Activated naive CD4-positive, alpha-beta T cell treated with anti-CD3 and anti-CD28 coated beads for 36 hours (primary cell): ENCODE measurements at regions of chr12 and their contacts with region 1.

Region 1: DNA sequence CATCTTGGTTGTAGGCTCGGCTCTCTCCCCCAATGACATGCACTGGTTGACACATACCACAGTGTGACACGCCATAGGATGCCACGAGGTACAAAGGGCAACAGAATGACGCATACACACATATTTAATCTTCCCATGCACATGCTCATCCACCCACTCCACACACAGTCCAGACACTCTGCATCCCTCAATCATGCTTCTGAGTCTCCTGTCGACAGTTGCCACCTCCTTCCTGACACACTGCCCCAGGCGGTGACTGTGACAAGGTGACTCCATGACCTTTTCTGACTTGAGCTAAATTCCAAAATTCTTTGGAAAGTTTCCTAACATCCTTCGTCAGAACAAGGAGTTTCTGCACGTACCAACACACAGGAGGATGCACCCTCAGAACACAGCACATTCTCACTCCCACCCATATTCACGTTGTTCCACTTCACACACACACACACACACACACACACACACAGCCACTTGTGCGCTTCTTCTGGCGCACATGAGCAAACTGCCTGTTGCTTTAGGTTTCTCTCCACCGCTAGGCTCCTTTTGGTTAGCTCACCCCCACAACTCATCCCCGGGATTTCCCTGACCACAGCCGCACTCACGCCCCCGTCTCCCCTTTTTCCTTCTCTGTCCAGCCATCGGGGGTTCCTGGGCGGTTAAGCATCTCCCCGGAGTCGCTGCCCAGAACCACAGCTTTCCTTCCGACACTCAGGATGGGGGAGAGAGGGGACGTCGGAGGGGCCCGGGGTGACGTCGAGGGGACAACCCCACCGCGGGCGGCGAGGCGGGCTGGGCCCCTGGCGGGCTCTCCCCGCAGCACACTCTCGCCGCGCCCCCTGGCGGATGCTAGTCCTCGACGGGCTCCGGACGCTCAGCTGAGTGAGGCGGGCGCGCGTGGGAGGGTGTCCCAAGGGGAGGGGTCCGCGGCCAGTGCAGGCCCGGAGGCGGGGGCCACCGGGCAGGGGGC is 524 bp upstream of the WNT1 start:
- DNase-seq: peak; percentile 83
- H3K4me3 Mint-ChIP-seq: peak overlapping the region; percentile 19
- H3K27ac Mint-ChIP-seq: no peak overlapping the region
- H3K4me1 Mint-ChIP-seq: peaks cover 44% of the 10 kb centered on the region
- H3K27me3 Mint-ChIP-seq: peaks cover 67% of the 10 kb centered on the region

Region 2: GRCh38 chr12:47054659-47055058 is 1922.9 kb before region 1 on chr12:
- CTCF ChIA-PET with region 1: no interaction called
- intact Hi-C with region 1: no loop called
- DNase-seq: no peak
- H3K4me3 Mint-ChIP-seq: no peak overlapping the region
- H3K27ac Mint-ChIP-seq: no peak overlapping the region
- H3K4me1 Mint-ChIP-seq: no peaks in the 10 kb centered on the region
- H3K27me3 Mint-ChIP-seq: no peaks in the 10 kb centered on the region

Region 3: GRCh38 chr12:48651681-48652080 is 325.9 kb before region 1 on chr12:
- CTCF ChIA-PET with region 1: no interaction called
- intact Hi-C with region 1: no loop called
- DNase-seq: no peak
- H3K4me3 Mint-ChIP-seq: no peak overlapping the region
- H3K27ac Mint-ChIP-seq: no peak overlapping the region
- H3K4me1 Mint-ChIP-seq: no peaks in the 10 kb centered on the region
- H3K27me3 Mint-ChIP-seq: no peaks in the 10 kb centered on the region

Region 4: DNA sequence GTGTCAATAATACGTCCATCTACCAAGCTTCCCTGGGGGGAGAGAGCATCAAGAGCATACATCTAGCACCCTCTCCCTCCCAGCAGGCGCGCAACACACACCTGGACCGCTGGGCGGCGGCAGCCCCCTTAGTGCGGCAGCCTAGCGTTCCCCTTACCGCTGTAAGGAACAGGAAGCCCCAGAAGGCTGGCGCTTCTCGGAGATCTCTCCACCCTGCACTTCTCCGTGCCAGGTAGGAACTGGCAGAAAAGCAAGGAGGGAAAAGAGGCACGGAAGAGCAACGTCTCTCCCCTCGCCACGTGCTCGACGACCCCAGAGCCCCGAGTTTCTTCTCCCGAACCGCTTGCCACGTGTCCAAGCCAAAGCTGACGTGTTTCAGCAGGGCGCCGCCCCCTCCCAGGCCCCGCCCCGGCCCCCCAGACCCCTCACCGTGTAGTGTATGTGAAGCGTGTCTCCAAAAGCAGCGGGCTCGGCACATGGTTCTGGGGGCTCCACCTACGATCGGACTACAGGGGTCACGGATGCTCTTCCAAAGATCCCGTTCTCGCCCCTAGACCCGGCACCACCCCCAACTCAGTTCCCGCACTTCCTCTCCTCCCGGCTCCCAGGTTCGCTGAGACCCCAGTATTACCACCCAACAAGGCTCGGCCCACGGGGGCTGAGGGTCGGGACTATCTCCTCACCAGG is 52.8 kb before region 1 on chr12:
- CTCF ChIA-PET with region 1: interaction called, 36 read pairs
- intact Hi-C with region 1: loop called (anchors 1 kb)
- DNase-seq: peak; percentile 81
- H3K4me3 Mint-ChIP-seq: peak overlapping the region; percentile 91
- H3K27ac Mint-ChIP-seq: peak overlapping the region; percentile 96
- H3K4me1 Mint-ChIP-seq: peaks cover 49% of the 10 kb centered on the region
- H3K27me3 Mint-ChIP-seq: no peaks in the 10 kb centered on the region

Region 5: GRCh38 chr12:48936379-48936979 is 41.1 kb before region 1 on chr12:
- CTCF ChIA-PET with region 1: interaction called, 4 read pairs
- intact Hi-C with region 1: loop called (anchors 1 kb)
- DNase-seq: peak; percentile 90
- H3K4me3 Mint-ChIP-seq: no peak overlapping the region
- H3K27ac Mint-ChIP-seq: peak overlapping the region; percentile 47
- H3K4me1 Mint-ChIP-seq: peaks cover 10% of the 10 kb centered on the region
- H3K27me3 Mint-ChIP-seq: no peaks in the 10 kb centered on the region

Region 6: GRCh38 chr12:48957141-48958048 is 20.2 kb before region 1 on chr12 and contains the start of gene ARF3:
- CTCF ChIA-PET with region 1: interaction called, 11 read pairs
- intact Hi-C with region 1: no loop called
- DNase-seq: peak; percentile 95
- H3K4me3 Mint-ChIP-seq: peak within 1 kb of the TSS; percentile 97
- H3K27ac Mint-ChIP-seq: peak within 1 kb of the TSS; percentile 86
- H3K4me1 Mint-ChIP-seq: peaks cover 29% of the 10 kb centered on the region
- H3K27me3 Mint-ChIP-seq: peaks cover 2% of the 10 kb centered on the region
- total RNA-seq, gene ARF3: 84.4 to 87.3 TPM

Region 7: DNA sequence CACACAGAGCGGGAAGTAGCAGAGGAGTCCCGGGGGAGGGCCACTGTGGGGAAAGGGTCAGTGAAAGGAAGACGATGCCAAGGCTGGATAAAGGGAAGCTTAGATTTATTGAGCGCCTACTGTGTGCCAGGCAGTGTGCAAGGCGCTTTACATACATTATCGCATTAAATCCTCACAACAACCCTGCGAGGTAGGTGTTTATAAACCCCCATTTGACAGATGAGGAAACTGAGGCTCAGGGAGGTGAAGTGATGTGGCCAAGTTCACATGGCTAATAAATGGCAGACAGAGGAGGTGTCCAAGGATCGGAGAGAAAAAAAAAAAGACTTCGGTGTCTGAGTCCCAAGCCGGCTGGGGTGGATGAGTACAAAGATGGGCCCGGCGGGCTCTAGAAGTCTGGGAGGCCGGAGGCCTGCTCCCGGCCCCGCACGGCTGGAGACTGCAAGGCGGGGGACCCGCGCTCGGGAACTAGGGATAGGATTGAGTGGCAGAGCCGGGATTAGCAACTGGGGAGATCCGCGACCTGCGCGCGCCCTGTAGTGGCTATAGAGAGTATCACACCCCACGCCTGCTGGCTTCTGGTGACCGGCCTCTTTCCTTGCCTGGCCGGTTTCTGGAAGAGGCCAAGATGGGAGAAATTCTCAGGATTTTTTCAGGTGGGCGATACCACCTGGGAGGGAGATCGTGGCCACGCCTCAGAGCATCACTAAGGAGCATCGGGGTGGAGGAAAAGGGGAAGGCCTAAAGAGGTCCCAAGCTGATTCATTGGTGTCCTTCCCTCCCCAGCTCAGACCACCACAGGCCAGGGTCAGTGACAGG is 17.7 kb after region 1 on chr12:
- CTCF ChIA-PET with region 1: interaction called, 223 read pairs
- intact Hi-C with region 1: loop called (anchors 1 kb)
- DNase-seq: peak; percentile 69
- H3K4me3 Mint-ChIP-seq: peak overlapping the region; percentile 10
- H3K27ac Mint-ChIP-seq: no peak overlapping the region
- H3K4me1 Mint-ChIP-seq: peaks cover 33% of the 10 kb centered on the region
- H3K27me3 Mint-ChIP-seq: peaks cover 54% of the 10 kb centered on the region

Region 8: DNA sequence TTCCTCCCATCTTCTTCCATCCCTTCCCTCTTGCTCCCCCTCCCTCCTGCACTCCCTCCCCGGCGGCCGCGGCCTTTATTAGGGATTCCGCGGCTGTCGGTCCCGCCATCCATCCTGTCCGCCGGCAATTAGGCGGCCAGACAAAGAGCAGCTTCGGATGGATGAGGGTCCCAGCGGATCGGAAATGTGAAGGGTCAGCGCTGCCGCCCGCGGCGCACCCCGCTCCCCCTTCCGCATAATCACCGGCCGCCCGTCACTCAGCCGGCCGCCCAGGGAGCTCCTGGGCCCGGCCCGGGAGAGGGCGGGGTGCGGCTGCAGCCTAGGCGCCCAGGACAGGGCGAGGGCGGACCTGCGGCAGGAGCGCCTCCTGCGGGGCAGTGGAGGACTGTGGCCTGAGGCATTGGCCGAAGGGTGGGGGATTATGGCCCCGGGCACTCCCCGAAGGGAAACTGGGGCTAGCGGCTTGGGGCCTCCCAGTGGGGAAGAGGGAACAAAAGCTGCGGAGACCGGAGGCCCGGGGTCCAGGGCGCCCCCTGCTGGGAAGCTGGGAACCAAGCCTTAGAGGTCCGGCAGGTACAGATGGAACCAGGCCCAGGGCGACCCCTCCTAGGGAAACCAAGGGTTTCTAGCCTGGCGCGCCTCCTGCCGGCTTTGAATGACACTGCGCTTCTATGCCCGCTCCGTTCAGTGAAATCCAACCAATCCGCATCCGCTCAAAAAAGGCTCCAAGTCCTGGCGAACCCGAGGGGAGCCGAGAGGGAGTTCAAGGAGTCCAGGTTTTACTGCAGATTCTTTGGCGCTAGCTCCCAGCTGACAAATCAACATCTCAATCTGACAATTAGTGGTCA is 364.7 kb after region 1 on chr12:
- CTCF ChIA-PET with region 1: no interaction called
- intact Hi-C with region 1: loop called (anchors 10 kb)
- DNase-seq: peak; percentile 90
- H3K4me3 Mint-ChIP-seq: no peak overlapping the region
- H3K27ac Mint-ChIP-seq: no peak overlapping the region
- H3K4me1 Mint-ChIP-seq: peaks cover 48% of the 10 kb centered on the region
- H3K27me3 Mint-ChIP-seq: peaks cover 78% of the 10 kb centered on the region